ENCODE measurements at regions of chr9 and their contacts with region 1.

Region 1: DNA sequence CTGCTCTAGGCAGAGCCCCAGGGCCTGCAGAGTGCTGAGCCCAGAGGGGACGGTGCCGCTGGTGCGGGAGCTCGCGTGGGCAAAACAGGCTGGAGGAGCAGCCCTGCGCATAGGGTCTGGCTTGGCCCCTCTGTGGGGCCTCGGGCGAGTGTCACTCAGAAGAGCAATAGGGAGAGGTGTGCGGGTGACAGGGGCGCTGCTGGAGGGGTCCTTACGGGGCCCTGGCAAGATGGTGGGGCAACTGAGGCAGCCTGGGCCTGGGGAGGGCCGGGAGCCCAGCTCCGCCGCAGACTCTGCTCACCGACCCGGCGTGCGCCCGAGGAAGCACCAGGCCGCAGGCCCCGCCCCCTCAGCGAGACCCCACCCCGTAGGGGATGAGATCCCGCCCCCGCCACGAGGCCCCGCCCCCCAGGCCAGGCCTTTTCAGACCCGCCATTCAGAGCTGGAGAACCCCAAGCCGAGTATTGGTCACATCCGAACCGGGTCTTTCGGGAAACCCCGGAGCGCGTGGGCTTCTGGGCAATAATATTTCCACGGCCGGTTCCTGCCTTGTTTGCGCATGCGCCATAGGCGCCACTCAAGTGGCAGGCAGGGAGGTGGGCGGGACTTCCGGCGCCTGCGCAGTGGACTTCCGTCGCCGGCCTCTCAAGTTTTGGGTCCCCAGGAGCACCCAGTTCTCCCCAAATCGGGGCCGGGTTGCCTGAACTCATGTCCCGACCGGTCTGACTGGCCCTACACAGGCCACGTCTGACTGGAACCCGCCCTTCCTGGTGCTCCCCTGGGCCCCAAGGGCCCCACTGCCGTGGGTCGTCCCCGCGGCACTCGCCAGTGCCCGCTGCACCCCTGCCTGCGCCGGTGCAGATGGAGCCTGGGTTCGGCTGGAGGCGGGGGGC is 1.3 kb upstream of the RNF208 start:
- DNase-seq: peak; percentile 95 to 98
- ATAC-seq: peak; percentile 44 to 76
- H3K4me3 ChIP-seq: peak overlapping the region; percentile 72
- H3K27ac ChIP-seq: peak overlapping the region; percentile 89 to 93
- H3K4me1 ChIP-seq: peaks cover 66% of the 10 kb centered on the region
- CTCF ChIP-seq: no peak
- EP300 ChIP-seq: no peak
- POLR2A ChIP-seq: peak; percentile 60
- RAD21 ChIP-seq: no peak

Region 2: DNA sequence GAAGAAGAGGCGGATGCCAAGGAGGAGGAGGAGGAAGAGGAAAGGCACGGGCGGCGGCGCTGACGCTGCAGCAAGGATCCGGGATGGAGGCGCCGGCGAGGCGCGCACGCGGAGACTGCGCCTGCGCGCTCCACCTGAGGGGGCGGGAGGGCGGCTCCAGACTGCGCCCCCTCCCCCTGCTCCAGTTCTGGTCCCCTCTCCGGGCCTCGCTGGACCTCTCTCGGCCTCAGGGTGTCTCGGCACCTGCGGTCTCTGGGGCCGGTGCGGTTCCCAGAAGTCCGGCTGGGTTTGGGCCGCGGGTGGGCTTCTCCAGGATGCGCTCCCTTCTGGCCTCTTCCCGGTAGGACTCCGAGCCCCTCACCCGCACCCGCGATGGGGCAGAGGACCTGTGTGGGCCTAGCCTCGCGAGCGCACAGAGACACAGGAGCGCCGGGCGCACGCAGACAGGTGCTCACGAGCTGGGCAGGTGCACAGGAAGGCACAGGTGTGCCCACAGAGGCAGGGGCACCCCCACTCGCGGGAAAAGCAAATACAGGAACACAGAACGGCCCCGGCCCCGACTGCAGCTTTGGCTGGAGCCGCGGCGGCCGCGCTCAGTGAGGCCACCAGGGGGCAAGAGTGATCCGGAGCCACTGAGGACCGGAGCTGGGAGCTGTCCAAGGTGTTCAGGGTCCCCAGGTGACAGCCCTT is 177.1 kb before region 1 on chr9 and contains the start of gene NPDC1:
- CTCF ChIA-PET with region 1: interaction called, 11 read pairs
- POLR2A ChIA-PET with region 1: no interaction called
- DNase-seq: peak; percentile 83 to 94
- ATAC-seq: peak; percentile 68 to 76
- H3K4me3 ChIP-seq: peak within 1 kb of the TSS; percentile 71
- H3K27ac ChIP-seq: peak within 1 kb of the TSS; percentile 77 to 92
- H3K4me1 ChIP-seq: peaks cover 15% of the 10 kb centered on the region
- CTCF ChIP-seq: peak; percentile 70
- EP300 ChIP-seq: no peak
- POLR2A ChIP-seq: peak; percentile 60
- RAD21 ChIP-seq: peak; percentile 71 to 77
- polyA plus RNA-seq, gene NPDC1: 12.7 and 13.0 TPM in 2 replicates

Region 3: GRCh38 chr9:137156567-137157375 is 66.6 kb before region 1 on chr9:
- CTCF ChIA-PET with region 1: interaction called, 5 read pairs
- POLR2A ChIA-PET with region 1: interaction called, 12 read pairs
- DNase-seq: peak in 1 of 2 experiments; percentile 58
- ATAC-seq: peak; percentile 19 to 62; a peak in 4 of 6 replicates
- H3K4me3 ChIP-seq: no peak overlapping the region
- H3K27ac ChIP-seq: no peak overlapping the region
- H3K4me1 ChIP-seq: peaks cover 20% of the 10 kb centered on the region; the same call in 2 of the 3 replicates
- CTCF ChIP-seq: no peak
- EP300 ChIP-seq: no peak
- POLR2A ChIP-seq: no peak
- RAD21 ChIP-seq: no peak

Region 4: GRCh38 chr9:137168905-137169856 is 54.1 kb before region 1 on chr9:
- CTCF ChIA-PET with region 1: interaction called, 17 read pairs
- POLR2A ChIA-PET with region 1: interaction called, 3 read pairs
- DNase-seq: peak; percentile 74 to 84
- ATAC-seq: peak; percentile 37 to 57
- H3K4me3 ChIP-seq: peak overlapping the region; percentile 47
- H3K27ac ChIP-seq: peak overlapping the region; percentile 59 to 78
- H3K4me1 ChIP-seq: peaks cover 27% of the 10 kb centered on the region
- CTCF ChIP-seq: no peak
- EP300 ChIP-seq: no peak
- POLR2A ChIP-seq: peak; percentile 39
- RAD21 ChIP-seq: no peak

Region 5: DNA sequence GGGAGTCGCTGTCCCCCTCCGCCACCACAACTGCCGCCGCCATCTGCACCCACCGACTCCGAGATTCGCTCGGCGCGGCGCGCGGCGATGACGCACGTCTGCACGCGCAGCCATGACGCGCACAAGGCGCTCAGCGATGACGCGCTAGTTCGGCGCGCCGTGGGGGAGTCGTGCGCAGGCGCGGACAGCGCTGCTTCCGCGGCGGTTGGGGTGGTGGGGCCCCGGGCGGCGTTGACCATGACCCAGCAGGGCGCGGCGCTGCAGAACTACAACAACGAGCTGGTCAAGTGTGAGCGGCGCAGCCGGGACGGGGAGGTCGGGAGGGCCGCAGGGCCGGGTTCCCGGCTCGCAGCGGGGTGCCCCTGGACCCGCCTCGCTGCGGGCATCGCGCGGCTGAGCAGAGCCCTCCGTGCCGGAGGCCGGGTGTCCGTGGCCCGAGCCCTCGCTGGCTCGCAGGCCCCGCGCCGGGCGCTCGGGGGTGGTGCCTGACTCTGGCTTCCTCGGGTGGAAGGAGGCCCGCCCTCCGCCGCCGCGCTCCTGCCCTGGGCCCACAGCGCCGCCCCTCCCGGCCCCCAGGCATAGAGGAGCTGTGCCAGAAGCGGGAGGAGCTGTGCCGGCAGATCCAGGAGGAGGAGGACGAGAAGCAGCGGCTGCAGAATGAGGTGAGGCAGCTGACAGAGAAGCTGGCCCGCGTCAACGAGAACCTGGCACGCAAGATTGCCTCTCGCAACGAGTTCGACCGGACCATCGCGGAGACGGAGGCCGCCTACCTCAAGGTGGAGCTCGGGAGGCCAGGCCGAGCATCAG is 34.6 kb before region 1 on chr9 and contains the starts of genes ANAPC2 and SSNA1:
- CTCF ChIA-PET with region 1: interaction called, 81 read pairs
- POLR2A ChIA-PET with region 1: interaction called, 20 read pairs
- DNase-seq: peak; percentile 69 to 96
- ATAC-seq: peak; percentile 66 to 82
- H3K4me3 ChIP-seq: peak within 1 kb of the TSS; percentile 92
- H3K27ac ChIP-seq: peak within 1 kb of the TSS; percentile 97
- H3K4me1 ChIP-seq: peaks cover 23% of the 10 kb centered on the region
- CTCF ChIP-seq: peak; percentile 39
- EP300 ChIP-seq: no peak
- POLR2A ChIP-seq: peak; percentile 65
- RAD21 ChIP-seq: peak; percentile 31 to 49; a peak in 3 of 5 replicates
- polyA plus RNA-seq, gene ANAPC2: 17.5 and 22.3 TPM in 2 replicates
- polyA plus RNA-seq, gene SSNA1: 52.6 and 54.1 TPM in 2 replicates

Measured in A549 (cell line).